ENCODE measurements at regions of chr5 and their contacts with region 1.

Region 1: GRCh38 chr5:121968910-121969607 is 7.3 kb downstream of the SRFBP1 start:
- DNase-seq: no peak
- H3K4me3 ChIP-seq: no peak overlapping the region
- H3K27ac ChIP-seq: no peak overlapping the region
- H3K4me1 ChIP-seq: peaks cover 4% of the 10 kb centered on the region
- H3K27me3 ChIP-seq: no peaks in the 10 kb centered on the region
- CTCF ChIP-seq: no peak
- EP300 ChIP-seq: no peak
- POLR2A ChIP-seq: no peak

Region 2: DNA sequence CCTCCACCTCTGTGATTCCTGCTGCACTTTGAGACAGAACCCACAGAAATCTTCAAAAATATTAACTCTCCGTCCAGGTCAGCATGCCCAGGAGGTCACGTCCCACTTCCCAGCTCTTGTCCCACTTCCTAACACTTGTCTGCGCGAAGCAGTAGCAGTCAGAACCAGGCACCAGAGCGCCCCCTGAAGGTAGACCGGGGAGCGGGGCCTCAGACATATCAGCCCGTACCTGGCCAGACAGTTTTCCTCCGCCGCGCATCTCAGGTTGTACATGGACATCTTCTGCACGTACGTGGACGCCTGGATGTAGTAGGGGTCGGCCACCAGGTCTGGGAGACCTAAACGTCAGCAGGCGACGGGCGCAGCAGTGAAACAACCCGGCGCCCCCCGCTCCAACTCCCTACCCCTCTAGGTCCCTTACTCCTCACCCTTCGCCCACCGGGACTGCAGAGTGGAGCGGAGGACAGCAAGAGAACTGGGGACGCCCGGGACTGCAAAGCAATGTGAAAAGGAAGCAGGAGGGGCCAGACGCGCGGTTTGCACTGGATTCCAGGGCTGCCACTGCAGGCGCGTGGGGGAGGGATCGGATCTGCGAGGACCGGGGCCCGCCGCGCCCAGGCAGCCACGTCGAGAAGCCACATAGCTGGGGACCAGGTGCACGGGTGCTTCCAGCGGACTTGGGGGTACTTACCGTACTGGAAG is 107.8 kb after region 1 on chr5:
- intact Hi-C with region 1: loop called in 2 of 4 experiments (anchors 10 kb)
- DNase-seq: peak; percentile 74 to 88 (median 86)
- H3K4me3 ChIP-seq: peak overlapping the region; percentile 52
- H3K27ac ChIP-seq: peak overlapping the region in 1 of 2 donors; percentile 67
- H3K4me1 ChIP-seq: no peaks in the 10 kb centered on the region
- H3K27me3 ChIP-seq: no peaks in the 10 kb centered on the region
- CTCF ChIP-seq: peak; percentile 53 to 76 (median 60)
- EP300 ChIP-seq: no peak
- POLR2A ChIP-seq: no peak